ENCODE measurements at regions of chr1 and their contacts with region 1.

Region 1: DNA sequence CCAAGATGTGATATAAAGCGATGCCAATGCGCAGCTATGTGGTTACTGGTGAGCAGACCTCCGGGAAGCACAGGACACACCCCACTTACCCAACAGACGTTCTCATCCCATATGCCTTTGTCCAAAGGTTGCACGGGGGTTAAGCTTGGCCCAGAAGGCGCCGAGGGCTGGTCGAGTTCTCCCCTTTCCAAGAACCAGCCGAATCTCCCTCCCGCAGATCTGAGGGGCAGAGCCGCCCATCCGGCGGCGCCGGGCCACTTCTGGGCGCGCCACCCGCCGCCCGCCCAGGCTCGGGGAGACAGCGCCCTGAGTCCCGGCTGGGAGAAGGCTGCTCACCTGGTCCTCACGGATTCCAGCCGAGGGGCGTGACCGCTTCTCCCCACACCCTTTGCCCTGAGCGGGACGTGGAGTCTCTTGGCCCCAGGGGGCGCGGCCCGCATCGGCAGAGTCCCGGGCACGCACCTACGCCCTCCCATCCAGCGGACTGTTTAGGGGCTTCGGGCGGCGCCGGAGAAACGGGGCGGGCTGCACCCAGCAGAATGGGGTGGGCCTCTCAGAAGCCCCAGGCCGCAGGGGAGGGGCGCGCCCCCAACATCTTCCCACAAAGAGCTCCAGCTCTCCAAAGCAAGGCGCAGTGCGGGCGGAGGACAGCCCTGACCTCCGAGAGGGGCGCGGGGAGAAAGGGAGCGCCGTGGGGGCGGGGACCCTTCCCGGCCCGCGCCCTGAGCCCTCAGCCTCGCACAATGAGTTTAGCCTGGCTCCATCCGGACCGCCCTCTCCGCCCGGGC is 615 bp downstream of the GPR161 start:
- DNase-seq: no peak
- CTCF ChIP-seq: no peak

Region 2: DNA sequence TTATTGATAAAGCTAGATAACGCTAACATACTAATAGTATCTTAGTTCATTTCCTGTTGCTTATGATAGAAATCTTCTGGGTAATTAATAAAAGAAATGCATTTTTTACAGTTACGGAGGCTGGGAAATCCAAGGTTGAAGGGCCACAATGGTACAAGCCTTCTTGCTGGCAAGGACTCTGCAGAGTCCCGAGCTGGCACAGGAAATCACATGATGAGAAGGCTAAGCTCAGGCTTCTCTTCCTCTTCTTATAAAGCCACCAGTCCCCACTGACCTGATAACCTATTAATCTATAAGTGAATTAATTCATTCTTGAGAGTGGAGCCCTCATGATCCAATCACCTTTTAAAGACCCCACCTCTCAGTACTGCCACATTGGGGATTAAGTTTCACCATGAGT is 82.0 kb before region 1 on chr1:
- CTCF ChIA-PET with region 1: no interaction called
- POLR2A ChIA-PET with region 1: no interaction called
- DNase-seq: no peak
- CTCF ChIP-seq: no peak

Region 3: GRCh38 chr1:168065506-168065905 is 70.6 kb before region 1 on chr1:
- CTCF ChIA-PET with region 1: no interaction called
- POLR2A ChIA-PET with region 1: no interaction called
- DNase-seq: no peak
- CTCF ChIP-seq: no peak

Region 4: DNA sequence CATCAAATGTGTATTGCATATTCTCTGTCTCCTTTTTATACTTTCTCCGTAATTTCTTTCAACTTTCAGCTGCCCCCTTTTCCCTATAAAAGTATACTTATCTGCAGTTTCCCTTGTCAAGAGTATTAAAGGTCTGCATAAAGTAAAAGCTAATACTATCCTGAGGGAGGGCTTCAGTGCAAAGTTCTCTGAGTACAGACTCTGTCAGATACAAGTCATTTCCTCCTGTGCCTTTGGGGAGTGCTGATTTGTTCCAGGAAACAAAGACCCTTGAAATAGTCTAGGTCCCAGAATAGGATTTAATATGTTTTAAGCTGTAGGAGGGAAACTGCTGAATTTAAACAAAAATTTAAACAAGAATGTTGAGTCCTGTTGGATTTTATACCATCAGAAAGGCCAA is 11.1 kb before region 1 on chr1:
- CTCF ChIA-PET with region 1: interaction called, 15 read pairs
- POLR2A ChIA-PET with region 1: no interaction called
- DNase-seq: no peak
- CTCF ChIP-seq: no peak

Region 5: DNA sequence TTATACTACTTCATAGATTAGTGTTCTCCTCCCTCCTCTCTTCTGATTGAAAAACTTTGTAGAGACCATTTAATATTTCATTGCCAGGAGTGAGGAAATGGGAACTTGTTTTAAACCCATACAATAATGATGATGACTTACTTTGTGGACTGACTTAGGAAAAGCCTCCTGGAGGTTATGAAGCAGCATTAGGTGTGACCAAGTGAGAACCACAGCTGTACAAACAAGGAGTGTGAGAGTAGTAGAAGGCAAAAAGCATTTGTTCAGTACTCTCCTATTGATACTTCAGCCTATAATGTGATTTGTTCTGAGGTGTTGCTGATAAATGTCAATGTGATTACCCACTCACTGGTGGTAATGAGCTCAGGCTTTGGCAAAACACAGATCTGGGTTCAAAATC is 51.1 kb after region 1 on chr1:
- CTCF ChIA-PET with region 1: no interaction called
- POLR2A ChIA-PET with region 1: no interaction called
- DNase-seq: no peak
- CTCF ChIP-seq: no peak